Dorsolateral prefrontal cortex (tissue), 120 donors: ENCODE measurements at regions of chr7 and their contacts with region 1.

Region 1: DNA sequence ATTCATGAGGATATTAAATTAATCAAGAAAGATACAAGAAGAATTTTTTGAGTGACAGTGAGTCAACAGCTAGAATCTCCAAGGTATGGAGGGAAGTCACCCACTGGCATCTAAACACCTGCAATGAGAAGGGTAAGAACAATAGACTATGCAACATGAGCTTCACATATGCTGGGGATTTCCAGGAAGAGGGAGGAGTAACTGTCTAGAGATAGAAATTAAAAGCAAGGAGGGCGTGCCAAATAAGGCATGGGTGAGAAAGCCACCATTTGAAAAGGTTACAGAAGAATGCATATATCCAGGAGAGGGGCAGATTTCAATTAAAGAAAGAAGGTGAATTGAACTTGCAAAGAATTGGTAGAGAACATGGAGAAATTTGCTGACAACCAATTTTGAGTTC is 365.7 kb downstream of the GPR37 start:
- DNase-seq: no peak
- H3K4me3 ChIP-seq: no peak overlapping the region
- H3K27ac ChIP-seq: no peak overlapping the region
- H3K27me3 ChIP-seq: no peaks in the 10 kb centered on the region
- CTCF ChIP-seq: no peak

Region 2: GRCh38 chr7:124162667-124163066 is 237.3 kb before region 1 on chr7:
- intact Hi-C with region 1: no loop called
- DNase-seq: no peak
- H3K4me3 ChIP-seq: no peak overlapping the region
- H3K27ac ChIP-seq: no peak overlapping the region
- H3K27me3 ChIP-seq: no peaks in the 10 kb centered on the region
- CTCF ChIP-seq: no peak

Region 3: GRCh38 chr7:124429923-124430322 is 30.0 kb after region 1 on chr7:
- intact Hi-C with region 1: loop called in 1 of 2 experiments (anchors 5 kb)
- DNase-seq: no peak
- H3K4me3 ChIP-seq: no peak overlapping the region
- H3K27ac ChIP-seq: no peak overlapping the region
- H3K27me3 ChIP-seq: no peaks in the 10 kb centered on the region
- CTCF ChIP-seq: no peak